RWPE1 (cell line): ENCODE measurements at regions of chr17 and their contacts with region 1.

Region 1: DNA sequence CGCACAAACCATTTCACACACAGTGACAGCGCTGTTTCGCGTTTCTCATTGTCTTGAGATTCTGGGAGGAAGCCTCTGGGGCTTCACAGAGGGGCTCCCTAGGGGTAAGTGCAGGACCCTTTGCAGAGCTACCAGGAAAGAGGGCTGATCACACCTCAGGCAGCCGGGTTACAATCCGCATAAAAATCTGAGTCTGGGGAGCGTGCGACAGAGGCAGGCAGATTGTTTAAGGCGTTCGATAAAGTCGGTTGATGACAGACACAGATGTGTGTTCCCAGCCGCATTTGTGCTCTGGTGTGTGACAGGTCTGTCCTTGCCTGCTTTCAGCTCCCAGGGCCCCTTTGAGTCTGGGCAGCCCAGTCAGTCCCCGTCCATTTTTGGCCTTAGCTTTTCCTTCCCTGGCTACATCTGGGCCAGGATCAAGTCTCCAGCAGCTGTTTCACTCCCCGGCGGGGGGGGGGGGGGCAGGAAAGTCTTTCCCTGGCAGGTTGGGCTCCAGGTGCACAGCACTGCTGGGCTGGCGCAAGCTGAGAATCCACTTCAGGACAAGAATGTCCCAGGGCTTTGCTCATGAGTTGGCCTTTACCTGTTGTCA is 1.4 kb upstream of the ZACN start:
- DNase-seq: no peak
- H3K27ac ChIP-seq: no peak overlapping the region
- CTCF ChIP-seq: no peak

Region 2: DNA sequence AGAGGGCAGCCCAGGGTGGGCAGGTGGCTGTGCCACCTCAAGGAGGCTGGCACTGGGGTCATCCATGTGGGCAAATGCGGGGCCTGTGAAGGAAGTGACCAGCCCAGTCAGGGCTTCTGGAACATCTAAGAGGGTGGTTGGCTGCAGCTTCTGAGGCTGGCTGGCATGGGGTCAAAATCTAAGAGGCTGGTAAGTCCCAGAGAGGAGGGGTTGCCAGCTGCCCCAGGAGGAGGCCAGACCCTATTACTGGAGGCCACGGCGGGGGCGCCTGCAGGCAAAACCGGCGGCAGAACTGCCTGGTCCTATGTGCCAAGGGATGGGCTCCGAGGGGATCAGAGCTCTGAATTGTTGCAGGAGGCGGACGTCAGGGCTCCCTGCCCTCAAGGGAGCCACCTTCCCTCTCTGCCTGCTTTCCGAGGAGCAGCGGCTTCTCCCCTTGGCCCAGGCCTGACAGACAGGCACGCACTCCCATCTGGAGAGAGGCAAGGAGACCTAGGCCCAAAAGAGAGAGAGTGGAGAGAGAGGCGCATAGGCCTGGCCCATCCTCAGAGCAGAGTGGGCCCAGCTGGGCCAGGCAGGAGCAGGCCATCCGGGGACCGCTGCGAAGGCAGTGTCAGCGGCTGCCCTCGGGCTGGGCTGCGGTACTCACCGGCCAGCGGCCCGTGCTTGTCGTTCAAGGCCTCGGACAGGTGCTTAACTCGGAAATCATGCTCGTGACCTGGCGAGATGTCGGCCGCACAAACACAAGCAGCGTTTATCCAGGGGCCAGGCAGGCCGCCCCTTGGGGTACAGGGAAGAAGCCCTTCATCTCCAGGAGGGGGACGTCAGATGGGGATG is 12.3 kb after region 1 on chr17:
- CTCF ChIA-PET with region 1: interaction called, 10 read pairs
- POLR2A ChIA-PET with region 1: no interaction called
- DNase-seq: no peak
- H3K27ac ChIP-seq: peak overlapping the region; percentile 13; the same call in 1 of the 2 replicates
- CTCF ChIP-seq: no peak